ENCODE measurements at regions of chr19 and their contacts with region 1.

Region 1: DNA sequence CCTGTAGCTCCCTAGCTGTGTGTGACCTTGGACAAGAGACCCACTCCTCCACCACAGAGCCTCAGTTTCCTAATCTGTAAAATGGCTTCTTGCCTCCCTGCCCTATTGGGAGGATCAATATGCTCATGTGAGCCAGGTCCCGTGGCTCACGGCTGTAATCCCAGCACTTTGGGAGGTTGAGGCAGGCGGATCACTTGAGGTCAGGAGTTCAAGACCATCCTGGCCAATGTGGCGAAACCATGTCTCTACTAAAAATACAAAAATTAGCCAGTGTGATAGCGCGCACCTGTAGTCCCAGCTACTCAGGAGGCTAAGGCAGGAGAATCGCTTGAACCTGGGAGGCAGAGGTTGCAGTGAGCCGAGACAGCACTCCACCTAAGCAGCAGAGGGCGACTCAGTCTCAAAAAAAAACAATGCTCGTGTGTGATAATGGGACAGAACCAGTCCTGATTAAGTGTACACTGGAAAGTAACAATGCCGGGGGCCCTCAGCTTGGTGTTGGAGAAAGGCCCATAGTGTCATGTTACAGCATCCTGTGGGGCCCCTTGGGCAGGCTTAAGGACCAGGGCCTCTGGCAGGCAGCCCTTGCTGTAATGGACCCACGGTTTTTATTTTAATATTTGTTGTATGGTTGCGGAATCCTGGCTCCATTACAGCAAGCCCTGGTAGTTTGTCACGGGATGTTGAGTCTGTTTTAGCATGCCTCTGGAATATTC is 6.8 kb downstream of the RPS11 start:
- H3K4me3 ChIP-seq: no peak overlapping the region
- H3K27ac ChIP-seq: no peak overlapping the region; the same call in 1 of the 2 replicates
- H3K4me1 ChIP-seq: no peaks in the 10 kb centered on the region; the same call in 1 of the 2 replicates
- CTCF ChIP-seq: peak; percentile 89

Region 2: GRCh38 chr19:49520705-49521319 is 17.8 kb after region 1 on chr19:
- CTCF ChIA-PET with region 1: interaction called, 17 read pairs
- POLR2A ChIA-PET with region 1: no interaction called
- H3K4me3 ChIP-seq: no peak overlapping the region
- H3K27ac ChIP-seq: no peak overlapping the region
- H3K4me1 ChIP-seq: no peaks in the 10 kb centered on the region
- CTCF ChIP-seq: no peak

Region 3: GRCh38 chr19:49533551-49534488 is 30.8 kb after region 1 on chr19:
- CTCF ChIA-PET with region 1: interaction called, 11 read pairs
- POLR2A ChIA-PET with region 1: no interaction called
- H3K4me3 ChIP-seq: peak overlapping the region; percentile 56
- H3K27ac ChIP-seq: no peak overlapping the region
- H3K4me1 ChIP-seq: no peaks in the 10 kb centered on the region
- CTCF ChIP-seq: no peak